Heart right ventricle (tissue), 16 donors: ENCODE measurements at regions of chr6 and their contacts with region 1.

Region 1: DNA sequence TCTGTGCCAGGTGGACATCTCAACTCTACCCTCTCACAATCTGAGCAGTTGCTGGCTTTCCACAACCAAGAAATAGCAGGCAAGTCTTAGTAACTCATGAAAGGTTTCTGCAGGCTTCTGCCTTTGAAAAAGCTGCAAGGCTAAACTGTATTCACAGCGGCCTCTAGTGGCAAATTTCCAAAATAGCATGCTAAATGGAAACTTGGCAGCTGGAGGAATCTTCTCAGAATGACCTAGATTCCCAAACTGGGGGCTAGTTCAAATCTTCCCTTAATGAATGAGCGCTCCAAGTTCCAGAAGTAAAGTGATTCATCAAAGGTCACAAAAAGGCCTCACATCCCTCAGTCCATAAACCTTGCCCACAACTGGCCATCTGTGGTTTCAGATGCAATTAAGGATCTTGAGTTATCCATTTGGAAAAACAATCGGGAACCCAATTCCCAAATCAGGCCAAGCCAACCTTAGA is 11.9 kb upstream of the CPNE5 start:
- DNase-seq: peak in 1 of 2 donors; percentile 71
- ATAC-seq: peak; percentile 0 to 36 (median 20)
- H3K4me3 ChIP-seq: no peak overlapping the region
- H3K27ac ChIP-seq: peak overlapping the region in 9 of 10 donors; percentile 43 to 86 (median 80)
- H3K4me1 ChIP-seq: peaks cover 5 to 76% (median 72%) of the 10 kb centered on the region in 9 donors
- H3K27me3 ChIP-seq: no peaks in the 10 kb centered on the region
- CTCF ChIP-seq: peak; percentile 59 to 88 (median 81)

Region 2: DNA sequence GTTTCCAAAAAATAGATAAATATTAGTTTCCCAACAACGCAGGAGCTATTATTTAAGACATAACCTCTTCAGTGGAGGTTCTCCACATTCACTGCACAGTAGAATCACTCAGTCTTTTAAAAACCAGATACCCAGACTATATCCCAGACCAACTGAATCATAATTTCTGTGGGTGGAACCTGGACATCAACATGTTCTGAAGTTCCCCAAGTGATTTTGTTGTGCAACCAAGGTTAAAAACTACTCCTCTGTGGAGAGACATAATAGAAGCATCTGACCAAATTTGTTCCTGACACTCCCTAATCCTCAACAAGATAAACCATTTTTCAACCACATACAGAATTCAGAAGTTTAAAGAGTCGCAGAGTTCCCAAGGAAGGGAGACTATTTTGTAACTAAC is 346.2 kb before region 1 on chr6:
- intact Hi-C with region 1: no loop called
- DNase-seq: no peak
- ATAC-seq: peak in 1 of 8 donors; percentile 22
- H3K4me3 ChIP-seq: no peak overlapping the region
- H3K27ac ChIP-seq: peak overlapping the region in 1 of 10 donors; percentile 18
- H3K4me1 ChIP-seq: peaks cover 0 to 14% (median 0%) of the 10 kb centered on the region in 9 donors
- H3K27me3 ChIP-seq: no peaks in the 10 kb centered on the region
- CTCF ChIP-seq: no peak

Region 3: DNA sequence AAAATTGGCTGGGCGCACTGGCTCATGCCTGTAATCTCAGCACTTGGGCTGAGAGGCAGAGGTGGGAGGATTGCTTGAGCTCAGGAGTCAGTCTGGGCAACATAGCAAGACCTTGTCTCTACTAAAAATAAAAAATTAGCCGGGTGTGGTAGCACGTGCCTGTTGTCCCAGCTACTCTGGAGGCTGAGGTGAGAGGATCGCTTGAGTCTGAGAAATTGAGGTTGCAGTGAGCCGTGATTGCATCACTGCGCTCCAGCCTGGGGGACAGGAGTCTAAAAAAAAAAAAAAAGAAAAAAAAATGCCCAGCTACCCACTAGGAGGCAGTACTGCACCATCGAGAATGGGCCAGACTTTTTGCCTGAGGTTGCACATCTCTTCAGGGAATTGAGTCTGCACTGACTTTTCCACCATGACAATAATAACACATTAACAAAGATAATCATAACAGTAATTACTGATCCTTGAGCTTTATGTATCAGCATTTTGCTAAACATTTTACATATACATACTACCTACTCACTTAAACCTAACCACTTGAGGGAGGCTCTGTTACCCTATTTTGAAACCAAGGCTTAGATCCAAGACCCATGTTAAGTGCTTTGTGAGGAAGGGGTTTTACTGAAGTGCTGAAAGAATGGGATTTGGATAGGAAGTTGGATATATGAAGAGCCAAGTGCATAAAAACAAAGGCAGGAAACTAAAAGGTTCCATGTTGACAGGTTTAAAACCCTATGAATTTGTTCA is 236.0 kb before region 1 on chr6:
- intact Hi-C with region 1: loop called in 4 of 10 experiments (anchors 10 kb)
- DNase-seq: no peak
- ATAC-seq: peak in 7 of 8 donors; percentile 45 to 82 (median 73)
- H3K4me3 ChIP-seq: no peak overlapping the region
- H3K27ac ChIP-seq: peak overlapping the region in 4 of 10 donors; percentile 11 to 32 (median 20)
- H3K4me1 ChIP-seq: peaks cover 2 to 46% (median 25%) of the 10 kb centered on the region in 9 donors
- H3K27me3 ChIP-seq: no peaks in the 10 kb centered on the region
- CTCF ChIP-seq: peak; percentile 47 to 73 (median 65)

Region 4: GRCh38 chr6:36623547-36624459 is 227.4 kb before region 1 on chr6:
- intact Hi-C with region 1: loop called in 4 of 10 experiments (anchors 10 kb)
- DNase-seq: peak; percentile 82 to 91
- ATAC-seq: peak; percentile 63 to 75 (median 70)
- H3K4me3 ChIP-seq: no peak overlapping the region
- H3K27ac ChIP-seq: peak overlapping the region in 1 of 10 donors; percentile 29
- H3K4me1 ChIP-seq: peaks cover 0 to 71% (median 52%) of the 10 kb centered on the region in 9 donors
- H3K27me3 ChIP-seq: no peaks in the 10 kb centered on the region
- CTCF ChIP-seq: peak; percentile 66 to 93 (median 87)

Region 5: GRCh38 chr6:36765594-36766398 is 85.4 kb before region 1 on chr6:
- intact Hi-C with region 1: loop called (anchors 1 to 5 kb)
- DNase-seq: peak; percentile 80 to 83
- ATAC-seq: peak; percentile 53 to 86 (median 80)
- H3K4me3 ChIP-seq: no peak overlapping the region
- H3K27ac ChIP-seq: no peak overlapping the region
- H3K4me1 ChIP-seq: peaks cover 12 to 45% (median 39%) of the 10 kb centered on the region in 9 donors
- H3K27me3 ChIP-seq: no peaks in the 10 kb centered on the region
- CTCF ChIP-seq: peak; percentile 67 to 96 (median 92)

Region 6: GRCh38 chr6:36885461-36886401 is 34.5 kb after region 1 on chr6 and contains the start of gene C6orf89:
- intact Hi-C with region 1: no loop called
- DNase-seq: peak; percentile 96 to 98
- ATAC-seq: peak; percentile 99 to 100 (median 100)
- H3K4me3 ChIP-seq: peak within 1 kb of the TSS; percentile 18 to 95 (median 74)
- H3K27ac ChIP-seq: peak within 1 kb of the TSS; percentile 76 to 95 (median 92)
- H3K4me1 ChIP-seq: peaks cover 8 to 46% (median 30%) of the 10 kb centered on the region in 9 donors
- H3K27me3 ChIP-seq: no peaks in the 10 kb centered on the region
- CTCF ChIP-seq: peak; percentile 78 to 96 (median 85)
- total RNA-seq, gene C6orf89: 64.6 to 104 (median 74.7) TPM